ENCODE measurements at regions of chr12 and their contacts with region 1.

Region 1: DNA sequence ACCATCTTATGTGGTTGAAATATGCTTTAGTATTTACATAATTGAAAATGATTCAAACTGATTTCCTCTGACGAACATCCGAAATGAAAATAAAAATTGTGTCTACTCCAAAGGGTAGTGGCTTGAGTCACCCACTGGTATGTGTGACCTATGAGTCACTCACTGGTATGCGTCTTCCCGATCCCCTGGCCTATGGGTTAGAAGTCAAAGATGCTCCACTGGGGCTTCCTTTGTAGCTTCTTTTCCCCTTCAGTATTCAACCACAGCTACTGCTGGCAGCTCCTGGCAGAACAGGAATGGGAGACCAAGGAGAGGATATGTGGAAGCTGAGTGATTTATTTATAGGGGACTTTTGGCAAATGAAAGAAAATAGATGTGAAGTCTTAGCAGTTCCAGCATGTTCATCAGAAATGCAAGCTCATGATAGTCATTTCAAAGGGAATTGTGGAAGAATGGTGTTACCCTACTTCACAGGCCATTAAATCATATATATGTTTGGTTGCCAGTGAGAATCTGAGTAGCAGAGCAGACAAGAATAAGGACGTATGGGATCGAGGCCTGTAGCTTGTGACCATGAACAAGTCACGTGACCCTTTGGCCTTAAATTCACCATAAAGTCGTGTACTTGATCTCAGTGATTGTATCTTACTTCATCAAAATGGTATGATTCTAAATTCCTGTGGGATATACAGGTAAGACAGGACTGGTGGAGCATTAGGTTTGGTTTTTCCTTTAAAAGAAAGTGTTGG is 108.3 kb downstream of the CRADD start:
- DNase-seq: no peak
- ATAC-seq: peak; percentile 84

Region 2: GRCh38 chr12:93802698-93803423 is 17.4 kb after region 1 on chr12:
- intact Hi-C with region 1: loop called (anchors 2 kb)
- DNase-seq: no peak
- ATAC-seq: peak; percentile 47

Region 3: GRCh38 chr12:93813972-93814821 is 28.8 kb after region 1 on chr12:
- intact Hi-C with region 1: loop called (anchors 2 kb)
- DNase-seq: peak; percentile 86
- ATAC-seq: peak; percentile 92

Region 4: GRCh38 chr12:93894391-93895088 is 109.1 kb after region 1 on chr12:
- intact Hi-C with region 1: no loop called
- DNase-seq: peak; percentile 94
- ATAC-seq: peak; percentile 95